Heart left ventricle (tissue), 16 donors: ENCODE measurements at regions of chr18 and their contacts with region 1.

Region 1: DNA sequence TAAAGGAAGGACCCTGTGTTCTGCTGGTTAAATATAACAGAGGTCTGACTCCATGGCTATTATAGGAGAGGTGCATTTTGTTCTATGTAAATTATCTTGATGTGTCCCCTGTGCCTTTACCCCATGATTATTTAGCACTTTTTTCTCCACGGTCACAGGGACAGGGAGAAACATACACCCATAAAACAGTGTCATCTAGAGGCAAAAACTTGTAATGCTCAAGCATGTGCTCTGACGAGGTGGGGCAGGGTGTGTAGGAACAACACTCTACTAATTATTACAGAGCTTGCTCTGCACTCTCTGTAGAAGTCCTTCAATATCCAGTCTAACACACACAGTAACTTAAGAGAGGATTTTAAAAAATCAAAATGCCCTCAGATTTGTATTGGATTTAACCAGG is 187.9 kb downstream of the NEDD4L start:
- DNase-seq: no peak
- ATAC-seq: peak; percentile 48 to 81 (median 74)
- H3K4me3 ChIP-seq: no peak overlapping the region
- H3K27ac ChIP-seq: peak overlapping the region in 2 of 12 donors; percentile 7 to 59
- H3K4me1 ChIP-seq: peaks cover 0 to 4% (median 0%) of the 10 kb centered on the region in 12 donors
- H3K27me3 ChIP-seq: no peaks in the 10 kb centered on the region
- CTCF ChIP-seq: peak in 10 of 12 donors; percentile 26 to 62 (median 42)
- POLR2A ChIP-seq: no peak

Region 2: GRCh38 chr18:58186258-58186948 is 45.5 kb before region 1 on chr18:
- intact Hi-C with region 1: loop called in 5 of 10 experiments (anchors 5 kb)
- DNase-seq: peak in 1 of 5 donors; percentile 39
- ATAC-seq: peak in 3 of 4 donors; percentile 27 to 67 (median 53)
- H3K4me3 ChIP-seq: no peak overlapping the region
- H3K27ac ChIP-seq: peak overlapping the region in 1 of 12 donors; percentile 41
- H3K4me1 ChIP-seq: peaks cover 0 to 18% (median 0%) of the 10 kb centered on the region in 12 donors
- H3K27me3 ChIP-seq: no peaks in the 10 kb centered on the region
- CTCF ChIP-seq: no peak
- POLR2A ChIP-seq: no peak

Region 3: DNA sequence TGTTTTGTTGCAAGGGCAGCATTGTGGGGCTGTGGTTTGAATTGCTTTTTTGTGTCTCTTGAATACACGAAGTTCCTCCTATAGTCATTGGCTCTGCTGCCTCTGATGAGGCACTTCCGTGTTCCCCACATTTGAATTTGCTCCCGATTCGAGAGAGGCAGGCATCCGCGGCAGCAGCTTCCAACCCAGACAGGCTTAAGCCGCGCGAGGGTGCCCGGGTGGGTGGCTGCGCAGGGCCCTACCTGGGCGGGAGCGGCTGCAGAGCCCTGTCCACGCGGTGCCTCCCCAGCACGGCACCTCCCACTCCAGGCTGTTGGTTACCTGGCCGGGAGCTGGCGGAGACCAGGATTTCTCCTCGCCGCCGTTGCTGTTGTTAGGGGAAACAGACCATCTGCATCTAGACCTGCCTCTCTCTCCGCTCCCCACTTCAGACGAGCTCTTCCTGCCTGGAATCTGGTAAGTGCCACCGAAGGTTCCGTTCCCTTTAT is 36.6 kb before region 1 on chr18:
- intact Hi-C with region 1: loop called in 5 of 10 experiments (anchors 5 kb)
- DNase-seq: peak in 1 of 5 donors; percentile 57
- ATAC-seq: peak in 3 of 4 donors; percentile 18 to 60 (median 59)
- H3K4me3 ChIP-seq: peak overlapping the region in 11 of 12 donors; percentile 17 to 64 (median 49)
- H3K27ac ChIP-seq: peak overlapping the region in 3 of 12 donors; percentile 30 to 78 (median 31)
- H3K4me1 ChIP-seq: peaks cover 0 to 26% (median 4%) of the 10 kb centered on the region in 12 donors
- H3K27me3 ChIP-seq: peaks cover 0 to 5% (median 0%) of the 10 kb centered on the region in 9 donors
- CTCF ChIP-seq: no peak
- POLR2A ChIP-seq: no peak